Activated CD4-positive, alpha-beta T cell treated with anti-CD3 and anti-CD28 coated beads, Interleukin-2, amount 10 ng/mL, durations not matched to agents 24 days and 14 days (primary cell): ENCODE measurements at regions of chr22 and their contacts with region 1.

Region 1: GRCh38 chr22:46592390-46592872 is 27.8 kb upstream of the GRAMD4 start:
- DNase-seq: peak; percentile 88
- H3K4me3 Mint-ChIP-seq: peak overlapping the region; percentile 77
- H3K27ac Mint-ChIP-seq: peak overlapping the region; percentile 88
- H3K4me1 Mint-ChIP-seq: peaks cover 33% of the 10 kb centered on the region
- H3K27me3 Mint-ChIP-seq: no peaks in the 10 kb centered on the region

Region 2: GRCh38 chr22:46604306-46604690 is 11.9 kb after region 1 on chr22:
- intact Hi-C with region 1: loop called (anchors 1 kb)
- DNase-seq: peak; percentile 90
- H3K4me3 Mint-ChIP-seq: peak overlapping the region; percentile 86
- H3K27ac Mint-ChIP-seq: peak overlapping the region; percentile 96
- H3K4me1 Mint-ChIP-seq: peaks cover 13% of the 10 kb centered on the region
- H3K27me3 Mint-ChIP-seq: no peaks in the 10 kb centered on the region